Activated CD4-positive, alpha-beta memory T cell treated with anti-CD3 and anti-CD28 coated beads for 36 hours (primary cell): ENCODE measurements at regions of chr2 and their contacts with region 1.

Region 1: DNA sequence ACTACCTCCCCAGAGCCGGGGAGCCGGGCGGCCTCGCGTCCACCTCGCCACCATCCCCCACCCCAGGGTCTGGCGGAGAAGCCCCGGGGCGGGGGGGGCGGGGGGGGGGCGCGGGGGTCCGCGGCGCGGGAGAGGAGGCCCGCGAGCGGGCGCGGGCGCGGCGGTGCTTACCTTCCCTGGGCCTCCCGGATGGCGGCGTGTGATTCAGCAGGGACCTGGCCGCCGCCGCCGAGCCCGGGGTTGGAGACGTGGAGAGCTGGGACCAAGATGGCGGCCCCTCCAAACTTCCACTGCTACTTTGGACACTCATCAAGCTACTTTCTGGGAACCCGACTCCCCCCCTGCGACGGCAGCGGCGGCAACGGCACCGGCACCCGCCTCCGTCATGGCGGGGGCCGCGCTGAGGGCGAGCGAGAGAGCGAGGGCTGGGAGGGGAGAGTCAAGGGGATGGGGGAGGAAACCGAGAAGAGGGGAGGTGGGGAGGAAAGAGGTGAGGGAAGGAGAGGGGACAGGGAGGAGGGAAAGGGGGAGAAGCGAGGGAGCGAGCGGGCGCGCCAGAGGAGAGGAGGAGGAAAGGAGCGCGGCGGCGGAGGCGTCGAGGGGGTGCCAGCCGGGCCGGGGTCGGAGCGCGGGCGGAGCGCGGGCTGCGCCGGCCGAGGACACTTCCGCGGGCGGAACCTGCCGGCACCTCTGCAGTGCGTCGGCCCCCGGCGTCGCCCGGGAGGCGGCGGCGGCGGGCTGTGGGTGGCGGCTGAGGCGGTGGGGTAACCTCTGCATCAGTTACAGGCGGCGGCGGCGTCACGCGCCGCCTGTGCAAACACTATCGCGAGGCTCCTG is at the start of gene TLK1:
- DNase-seq: peak; percentile 81
- H3K4me3 Mint-ChIP-seq: peak within 1 kb of the TSS; percentile 92
- H3K27ac Mint-ChIP-seq: peak within 1 kb of the TSS; percentile 88
- H3K4me1 Mint-ChIP-seq: peaks cover 56% of the 10 kb centered on the region
- H3K27me3 Mint-ChIP-seq: no peaks in the 10 kb centered on the region
- total RNA-seq, gene TLK1: 59.2 to 64.5 TPM

Region 2: DNA sequence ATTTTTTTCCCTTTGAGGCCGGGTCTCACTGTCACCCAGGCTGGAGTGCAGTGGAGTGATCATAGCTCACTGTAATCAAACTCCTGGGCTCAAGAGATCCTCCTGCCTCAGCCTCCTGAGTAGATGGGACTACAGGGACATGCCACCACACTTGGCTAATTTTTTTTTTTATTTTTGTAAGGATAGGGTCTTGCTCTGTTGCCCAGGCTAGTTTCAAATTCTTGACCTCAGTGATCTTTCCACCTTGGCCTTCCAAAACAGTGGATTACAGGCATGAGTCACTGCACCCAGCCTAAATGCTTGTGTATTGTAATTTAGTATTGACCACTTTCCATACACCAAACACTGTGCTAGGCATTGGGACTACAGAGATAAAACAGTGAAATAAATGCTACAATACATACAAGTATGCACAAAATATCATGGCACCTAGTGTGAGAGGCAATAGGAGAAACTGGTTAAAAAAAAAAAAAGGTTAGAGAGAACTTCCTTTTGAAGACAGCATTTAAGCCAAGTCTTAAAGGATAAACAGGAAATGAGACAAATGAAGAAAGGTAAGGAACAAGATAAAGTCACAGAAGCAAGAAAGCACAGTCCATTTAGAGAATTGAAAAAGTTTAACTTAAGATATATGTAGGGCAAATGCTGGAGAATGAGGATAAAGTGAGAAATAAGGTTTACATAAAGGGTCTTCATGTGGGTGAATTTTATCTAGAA is 117.9 kb before region 1 on chr2:
- CTCF ChIA-PET with region 1: no interaction called
- POLR2A ChIA-PET with region 1: no interaction called
- intact Hi-C with region 1: loop called (anchors 5 kb)
- DNase-seq: no peak
- H3K4me3 Mint-ChIP-seq: no peak overlapping the region
- H3K27ac Mint-ChIP-seq: peak overlapping the region; percentile 76
- H3K4me1 Mint-ChIP-seq: peaks cover 30% of the 10 kb centered on the region
- H3K27me3 Mint-ChIP-seq: no peaks in the 10 kb centered on the region

Region 3: DNA sequence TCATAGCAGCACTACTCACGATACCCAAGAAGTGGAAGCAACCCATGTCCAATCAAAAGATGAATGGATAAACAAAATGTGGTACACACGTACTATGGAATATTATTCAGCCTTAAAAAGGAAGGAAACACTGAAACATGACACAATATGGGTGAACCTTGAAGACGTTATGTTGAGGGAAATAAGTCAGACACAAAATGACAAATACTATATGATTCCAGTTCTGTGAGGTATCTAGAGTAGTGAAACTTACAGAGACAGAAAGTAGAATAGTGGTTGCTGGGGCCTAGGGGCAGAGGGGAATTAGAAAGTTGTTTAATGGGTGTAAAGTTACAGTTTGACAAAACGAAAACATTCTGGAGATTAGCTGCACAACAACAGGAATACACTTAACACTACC is 24.3 kb before region 1 on chr2:
- CTCF ChIA-PET with region 1: interaction called, 3 read pairs
- POLR2A ChIA-PET with region 1: interaction called, 4 read pairs
- intact Hi-C with region 1: loop called (anchors 2 kb)
- DNase-seq: peak; percentile 55
- H3K4me3 Mint-ChIP-seq: peak overlapping the region; percentile 27
- H3K27ac Mint-ChIP-seq: peak overlapping the region; percentile 78
- H3K4me1 Mint-ChIP-seq: peaks cover 69% of the 10 kb centered on the region
- H3K27me3 Mint-ChIP-seq: no peaks in the 10 kb centered on the region

Region 4: DNA sequence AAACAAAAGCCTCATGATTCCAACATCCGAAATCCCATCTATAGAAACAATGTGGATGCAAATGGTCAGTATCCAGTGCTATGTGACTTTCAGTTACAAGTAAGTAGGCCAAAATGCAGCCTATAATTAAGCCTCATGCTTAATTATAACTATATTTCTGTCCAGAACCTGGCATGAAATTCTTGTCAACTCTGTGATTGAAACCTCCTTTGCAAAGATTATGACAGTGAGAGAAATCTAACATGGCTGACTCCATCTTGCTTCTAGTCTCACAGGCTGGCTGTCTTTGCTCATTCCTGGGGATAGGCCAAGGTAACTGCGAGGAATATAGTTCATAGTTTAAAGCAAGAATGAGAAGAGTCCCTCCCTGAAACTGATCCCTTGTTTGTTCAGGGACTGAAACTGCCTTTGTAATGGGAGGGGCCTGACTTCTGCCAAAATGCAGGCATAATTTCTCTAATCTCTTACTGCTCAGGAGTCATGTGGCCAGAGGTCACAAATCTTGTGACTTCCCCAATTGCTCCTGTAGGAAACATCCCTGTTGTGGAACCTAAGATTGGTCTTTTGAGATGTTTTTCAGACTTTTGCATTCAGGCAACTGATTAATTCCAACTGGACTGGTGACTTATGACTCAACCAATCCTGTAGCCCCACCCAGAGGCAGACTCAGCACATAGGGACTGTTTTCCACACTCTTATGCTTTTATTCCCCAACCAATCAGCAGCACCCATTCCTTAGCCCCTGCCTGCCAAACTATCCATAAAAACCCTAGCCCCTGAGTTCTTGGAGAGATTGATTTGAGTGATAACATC is 84.8 kb after region 1 on chr2:
- CTCF ChIA-PET with region 1: no interaction called
- POLR2A ChIA-PET with region 1: no interaction called
- intact Hi-C with region 1: loop called (anchors 2 kb)
- DNase-seq: peak; percentile 13
- H3K4me3 Mint-ChIP-seq: no peak overlapping the region
- H3K27ac Mint-ChIP-seq: no peak overlapping the region
- H3K4me1 Mint-ChIP-seq: peaks cover 50% of the 10 kb centered on the region
- H3K27me3 Mint-ChIP-seq: no peaks in the 10 kb centered on the region

Region 5: GRCh38 chr2:171287611-171288010 is 127.3 kb after region 1 on chr2:
- CTCF ChIA-PET with region 1: no interaction called
- POLR2A ChIA-PET with region 1: no interaction called
- intact Hi-C with region 1: no loop called
- DNase-seq: no peak
- H3K4me3 Mint-ChIP-seq: no peak overlapping the region
- H3K27ac Mint-ChIP-seq: no peak overlapping the region
- H3K4me1 Mint-ChIP-seq: no peaks in the 10 kb centered on the region
- H3K27me3 Mint-ChIP-seq: no peaks in the 10 kb centered on the region

Region 6: DNA sequence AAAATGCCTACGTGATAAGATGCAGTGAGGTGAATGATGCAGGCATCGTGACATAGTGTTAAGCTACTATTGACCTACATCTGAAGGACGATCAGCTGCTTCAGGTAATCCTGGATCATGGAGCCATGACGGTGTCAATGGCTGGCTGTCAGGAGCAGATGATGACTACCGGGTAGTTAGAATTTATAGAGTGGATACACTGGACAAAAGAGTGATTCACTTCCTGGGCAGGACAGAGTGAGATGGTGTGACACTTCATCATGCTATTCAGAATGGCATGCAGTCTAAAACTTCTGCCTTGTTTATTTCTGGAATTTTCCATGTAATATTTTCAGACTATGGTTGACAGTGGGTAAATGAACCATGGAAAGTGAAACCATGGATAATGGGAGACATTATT is 243.9 kb after region 1 on chr2:
- CTCF ChIA-PET with region 1: no interaction called
- POLR2A ChIA-PET with region 1: interaction called, 6 read pairs
- intact Hi-C with region 1: loop called (anchors 5 kb)
- DNase-seq: no peak
- H3K4me3 Mint-ChIP-seq: no peak overlapping the region
- H3K27ac Mint-ChIP-seq: no peak overlapping the region
- H3K4me1 Mint-ChIP-seq: peaks cover 46% of the 10 kb centered on the region
- H3K27me3 Mint-ChIP-seq: no peaks in the 10 kb centered on the region

Region 7: GRCh38 chr2:172046080-172046678 is 885.8 kb after region 1 on chr2:
- CTCF ChIA-PET with region 1: no interaction called
- POLR2A ChIA-PET with region 1: no interaction called
- intact Hi-C with region 1: no loop called
- DNase-seq: no peak
- H3K4me3 Mint-ChIP-seq: no peak overlapping the region
- H3K27ac Mint-ChIP-seq: no peak overlapping the region
- H3K4me1 Mint-ChIP-seq: peaks cover 3% of the 10 kb centered on the region
- H3K27me3 Mint-ChIP-seq: no peaks in the 10 kb centered on the region